Naive thymus-derived CD8-positive, alpha-beta T cell (primary cell): ENCODE measurements at regions of chr2 and their contacts with region 1.

Region 1: DNA sequence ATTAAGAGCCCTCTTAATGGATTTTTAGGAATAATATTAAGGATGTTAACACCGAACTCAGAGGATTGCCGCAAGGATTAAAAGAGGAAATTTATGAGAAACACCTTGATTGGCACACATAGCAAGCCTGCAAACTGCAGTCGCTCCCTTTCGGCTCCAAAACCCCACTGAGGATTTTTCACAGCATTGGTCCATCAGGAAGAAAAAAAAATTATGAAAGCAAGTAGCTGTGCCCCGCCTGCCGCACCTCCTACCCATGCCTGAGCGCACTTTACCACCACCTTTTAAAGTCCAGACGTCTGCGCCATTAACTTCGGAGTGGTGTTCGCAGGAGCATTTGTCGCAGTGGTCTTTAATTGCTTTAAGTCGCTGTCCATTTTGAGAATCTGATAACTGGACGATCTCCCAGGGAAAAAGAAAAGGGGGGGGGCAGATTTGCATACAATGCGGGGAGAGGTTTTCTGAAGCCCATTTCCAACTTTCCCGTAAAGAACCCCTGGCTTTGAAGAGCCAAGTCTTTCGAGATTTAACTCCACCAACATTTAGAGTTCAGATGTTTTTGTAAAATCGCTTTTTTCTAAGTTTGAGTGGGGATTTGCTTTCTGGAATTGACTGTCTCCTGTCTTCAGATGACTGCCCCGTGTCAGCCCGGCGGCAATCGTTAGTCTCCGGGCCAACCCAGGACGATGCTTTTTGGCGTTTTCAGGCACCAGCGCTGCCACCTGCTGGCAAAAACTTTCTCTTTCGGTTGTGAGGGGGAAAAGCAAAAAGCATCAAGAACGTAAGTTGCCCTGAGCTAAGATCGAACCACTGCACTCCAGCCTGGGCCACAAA is 914 bp upstream of the TRABD2A start:
- DNase-seq: peak; percentile 67 to 92 (median 86)
- ATAC-seq: peak; percentile 62 to 68
- H3K4me3 Mint-ChIP-seq: peak overlapping the region; percentile 87 to 99 (median 94)
- H3K27ac Mint-ChIP-seq: peak overlapping the region; percentile 93 to 99 (median 98)
- H3K4me1 Mint-ChIP-seq: peaks cover 32 to 73% (median 57%) of the 10 kb centered on the region in 4 donors
- H3K27me3 Mint-ChIP-seq: peaks cover 0 to 2% (median 0%) of the 10 kb centered on the region in 5 donors

Region 2: DNA sequence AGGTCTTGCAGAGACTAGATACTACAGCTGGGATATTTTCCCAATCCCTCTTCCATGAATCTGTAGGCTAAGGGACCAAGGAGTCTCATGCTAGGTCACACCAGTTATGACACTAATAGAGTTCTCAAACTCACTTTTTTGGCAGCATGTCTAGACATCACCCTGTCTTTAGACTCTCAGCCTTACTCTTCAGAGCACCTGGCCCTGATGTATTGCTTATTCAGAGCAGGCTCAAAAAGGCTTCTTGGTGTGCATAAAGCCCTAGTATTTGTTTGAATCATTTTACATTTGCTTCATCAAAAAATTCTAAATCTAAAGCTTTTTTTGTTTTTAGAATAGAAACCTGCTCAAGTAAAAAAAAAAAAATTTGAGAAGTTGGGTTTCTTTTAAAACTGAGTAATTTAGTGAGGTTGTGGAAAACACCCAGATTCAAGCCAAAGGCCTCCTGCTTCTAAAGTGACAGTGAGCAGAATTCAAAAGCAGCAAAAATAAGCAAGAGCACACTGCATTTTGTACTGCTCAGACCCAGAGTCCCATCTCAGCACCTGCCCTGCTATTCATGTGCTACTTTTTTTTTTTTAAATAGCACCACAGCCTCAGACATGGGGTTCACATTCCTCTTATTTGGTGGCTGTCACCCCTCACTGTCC is 383.5 kb before region 1 on chr2:
- POLR2A ChIA-PET with region 1: interaction called, 13 read pairs
- DNase-seq: no peak
- ATAC-seq: no peak
- H3K4me3 Mint-ChIP-seq: no peak overlapping the region
- H3K27ac Mint-ChIP-seq: peak overlapping the region; percentile 6 to 77 (median 46)
- H3K4me1 Mint-ChIP-seq: peaks cover 6 to 19% (median 17%) of the 10 kb centered on the region in 4 donors
- H3K27me3 Mint-ChIP-seq: peaks cover 0 to 3% (median 0%) of the 10 kb centered on the region in 5 donors

Region 3: GRCh38 chr2:84817239-84817655 is 64.6 kb before region 1 on chr2:
- POLR2A ChIA-PET with region 1: no interaction called
- DNase-seq: no peak
- ATAC-seq: peak in 1 of 2 donors; percentile 43
- H3K4me3 Mint-ChIP-seq: peak overlapping the region in 6 of 10 donors; percentile 0 to 46 (median 33)
- H3K27ac Mint-ChIP-seq: peak overlapping the region; percentile 35 to 87 (median 76)
- H3K4me1 Mint-ChIP-seq: peaks cover 34 to 84% (median 79%) of the 10 kb centered on the region in 4 donors
- H3K27me3 Mint-ChIP-seq: no peaks in the 10 kb centered on the region

Region 4: GRCh38 chr2:84840306-84840705 is 41.5 kb before region 1 on chr2:
- POLR2A ChIA-PET with region 1: interaction called, 29 read pairs
- DNase-seq: peak in 1 of 10 donors; percentile 23
- ATAC-seq: peak; percentile 10 to 17
- H3K4me3 Mint-ChIP-seq: peak overlapping the region; percentile 64 to 92 (median 82)
- H3K27ac Mint-ChIP-seq: peak overlapping the region; percentile 93 to 98 (median 97)
- H3K4me1 Mint-ChIP-seq: peaks cover 60 to 93% (median 91%) of the 10 kb centered on the region in 4 donors
- H3K27me3 Mint-ChIP-seq: no peaks in the 10 kb centered on the region

Region 5: DNA sequence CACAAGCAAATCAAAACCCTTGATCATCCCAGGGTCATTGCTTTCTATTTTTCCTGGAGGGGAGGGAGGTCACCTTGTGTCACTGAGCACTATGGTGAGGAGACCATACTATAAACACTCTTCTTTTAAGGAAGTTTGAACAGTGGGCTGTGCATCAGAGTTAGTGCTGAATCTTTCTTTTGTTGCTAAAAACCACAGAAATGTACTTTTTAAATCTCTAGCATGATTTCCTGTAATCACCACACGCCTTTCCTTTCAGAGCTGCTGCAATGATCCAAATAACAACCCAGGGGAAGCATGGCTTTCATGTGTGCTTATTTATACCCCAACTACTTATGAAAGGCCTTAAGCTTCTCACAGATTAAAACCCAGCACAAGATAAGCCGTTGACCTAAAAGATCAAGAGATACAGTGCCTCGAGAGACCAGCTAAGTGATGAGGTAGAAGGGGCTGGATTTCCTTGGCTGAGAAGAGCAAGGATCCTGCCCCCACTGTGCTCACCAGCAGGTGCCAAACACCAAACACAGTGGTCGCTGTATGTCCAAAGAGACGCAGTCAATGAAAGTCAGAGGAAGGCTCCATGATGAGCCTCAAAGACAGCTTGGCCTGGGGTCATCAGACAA is 35.6 kb before region 1 on chr2:
- POLR2A ChIA-PET with region 1: interaction called, 29 read pairs
- DNase-seq: peak in 8 of 10 donors; percentile 55 to 88 (median 74)
- ATAC-seq: peak; percentile 74 to 76
- H3K4me3 Mint-ChIP-seq: peak overlapping the region; percentile 60 to 90 (median 82)
- H3K27ac Mint-ChIP-seq: peak overlapping the region; percentile 93 to 98 (median 97)
- H3K4me1 Mint-ChIP-seq: peaks cover 56 to 97% (median 95%) of the 10 kb centered on the region in 4 donors
- H3K27me3 Mint-ChIP-seq: no peaks in the 10 kb centered on the region

Region 6: DNA sequence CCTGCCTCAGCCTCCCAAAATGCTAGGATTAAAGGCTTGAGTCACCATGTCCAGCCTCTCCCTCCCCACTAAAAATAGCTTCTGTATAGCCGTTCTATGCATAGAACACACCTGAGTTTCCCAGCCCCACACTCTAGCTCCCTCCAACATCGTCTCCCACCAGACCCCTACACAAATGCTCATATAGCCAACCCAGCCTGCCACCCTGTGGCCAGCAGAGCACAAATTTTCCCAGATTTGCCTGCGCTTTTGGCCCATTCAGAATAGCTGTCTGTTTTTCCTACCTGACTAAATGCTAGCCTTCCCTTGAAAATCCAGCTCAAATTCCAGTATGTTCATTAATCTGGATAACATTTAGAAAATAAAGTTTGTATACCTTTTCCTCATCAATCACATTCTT is 23.7 kb before region 1 on chr2:
- POLR2A ChIA-PET with region 1: interaction called, 37 read pairs
- DNase-seq: peak in 1 of 10 donors; percentile 18
- ATAC-seq: no peak
- H3K4me3 Mint-ChIP-seq: peak overlapping the region; percentile 4 to 87 (median 80)
- H3K27ac Mint-ChIP-seq: peak overlapping the region; percentile 93 to 99 (median 98)
- H3K4me1 Mint-ChIP-seq: peaks cover 75 to 96% (median 94%) of the 10 kb centered on the region in 4 donors
- H3K27me3 Mint-ChIP-seq: no peaks in the 10 kb centered on the region

Region 7: DNA sequence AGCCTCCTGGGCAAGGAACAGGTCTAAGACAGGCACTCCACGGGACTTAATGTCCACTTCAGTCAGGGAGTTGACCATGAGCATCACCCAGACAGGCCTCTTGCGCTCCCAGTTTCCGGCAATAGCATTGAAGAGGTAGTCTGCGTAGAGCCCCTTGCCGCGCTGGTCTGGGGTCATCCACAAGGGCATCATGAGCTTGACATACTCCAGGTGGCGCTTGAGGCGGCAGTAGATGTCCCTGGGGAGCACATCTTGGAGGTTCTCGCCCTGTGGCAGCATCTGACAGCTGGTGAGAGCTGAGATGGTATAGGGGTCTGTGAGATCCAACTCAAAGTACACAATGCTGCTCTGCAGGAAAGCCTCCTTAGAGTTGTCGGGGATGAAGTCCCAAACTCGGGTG is 11.5 kb before region 1 on chr2:
- POLR2A ChIA-PET with region 1: interaction called, 28 read pairs
- DNase-seq: no peak
- ATAC-seq: no peak
- H3K4me3 Mint-ChIP-seq: peak overlapping the region; percentile 10 to 74 (median 66)
- H3K27ac Mint-ChIP-seq: peak overlapping the region; percentile 80 to 93 (median 91)
- H3K4me1 Mint-ChIP-seq: peaks cover 48 to 90% (median 79%) of the 10 kb centered on the region in 4 donors
- H3K27me3 Mint-ChIP-seq: no peaks in the 10 kb centered on the region

Region 8: DNA sequence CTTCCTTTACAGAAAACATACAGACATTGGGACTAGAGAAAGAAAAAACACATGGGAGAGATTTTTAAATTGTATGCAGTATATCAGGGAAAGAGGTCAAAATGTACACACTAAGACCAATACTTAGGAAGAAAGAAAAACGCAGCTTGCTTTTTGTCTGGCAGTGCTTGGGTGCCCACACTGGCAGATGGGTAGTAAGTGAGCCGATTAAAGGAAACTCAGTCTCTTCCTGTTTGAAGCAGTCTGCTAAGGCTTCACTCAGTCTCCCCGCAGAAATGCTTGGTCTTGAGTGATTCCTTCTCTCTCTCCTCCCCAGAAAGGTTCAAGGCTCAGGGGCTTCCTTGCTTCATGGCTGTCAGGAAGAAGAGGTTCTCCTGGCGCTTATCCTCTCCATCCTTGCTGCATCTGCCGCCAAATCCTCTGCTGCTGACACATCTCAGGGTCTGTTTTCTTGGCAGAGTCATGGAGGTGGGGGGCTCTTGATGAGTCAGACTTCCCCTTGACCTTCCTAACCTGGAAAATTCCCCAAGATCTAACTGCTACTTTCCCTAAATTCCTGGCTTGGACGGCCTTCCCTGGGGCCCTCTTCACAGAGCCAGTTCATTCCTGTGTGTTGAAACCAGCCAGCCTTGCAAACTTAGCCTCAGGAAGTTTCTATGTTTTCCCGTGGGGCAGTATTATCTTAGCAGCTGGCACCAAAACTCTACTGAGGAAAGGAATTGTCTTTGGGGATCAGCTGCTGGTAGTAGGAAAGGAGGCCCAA is 13.1 kb after region 1 on chr2:
- POLR2A ChIA-PET with region 1: interaction called, 289 read pairs
- DNase-seq: peak in 4 of 10 donors; percentile 26 to 54 (median 50)
- ATAC-seq: peak; percentile 74 to 80
- H3K4me3 Mint-ChIP-seq: peak overlapping the region; percentile 58 to 86 (median 70)
- H3K27ac Mint-ChIP-seq: peak overlapping the region; percentile 56 to 98 (median 96)
- H3K4me1 Mint-ChIP-seq: peaks cover 29 to 72% (median 62%) of the 10 kb centered on the region in 4 donors
- H3K27me3 Mint-ChIP-seq: no peaks in the 10 kb centered on the region